ENCODE measurements at regions of chr19 and their contacts with region 1.

Region 1: GRCh38 chr19:46766569-46767317 is 20.5 kb upstream of the STRN4 start:
- DNase-seq: no peak
- ATAC-seq: peak; percentile 99
- H3K4me3 ChIP-seq: no peak overlapping the region
- H3K27ac ChIP-seq: no peak overlapping the region
- H3K4me1 ChIP-seq: no peaks in the 10 kb centered on the region
- H3K27me3 ChIP-seq: no peaks in the 10 kb centered on the region
- CTCF ChIP-seq: peak; percentile 70 to 89 (median 86)
- EP300 ChIP-seq: no peak
- POLR2A ChIP-seq: no peak
- RAD21 ChIP-seq: peak; percentile 38; the same call in 1 of the 2 replicates

Region 2: DNA sequence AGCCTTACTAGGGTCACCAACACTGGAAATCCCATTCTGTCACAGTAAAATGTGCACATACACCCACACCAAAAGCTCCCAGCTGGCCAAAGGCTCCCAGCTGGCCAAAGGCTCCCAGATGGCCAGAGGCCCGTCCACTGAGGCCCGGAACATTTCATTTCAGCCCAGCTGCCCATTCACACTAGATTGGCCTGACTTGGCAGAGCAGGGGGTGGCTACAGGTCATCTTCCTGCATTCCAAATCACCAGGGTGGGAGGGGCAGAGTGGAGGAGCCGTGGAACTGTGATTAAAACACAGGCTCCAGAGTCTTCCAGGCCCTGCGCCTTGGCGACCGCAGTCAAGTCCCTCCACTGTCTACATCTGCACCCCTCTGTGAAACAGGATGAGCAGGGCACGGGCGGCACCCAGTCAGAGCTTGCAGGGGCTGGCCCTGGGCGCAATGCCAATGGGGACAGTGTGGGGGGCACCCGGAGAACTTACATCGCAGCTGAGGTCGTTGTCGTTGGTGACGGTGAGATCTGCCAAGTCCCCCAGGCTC is 39.7 kb before region 1 on chr19:
- CTCF ChIA-PET with region 1: no interaction called
- POLR2A ChIA-PET with region 1: no interaction called
- RAD21 ChIA-PET with region 1: no interaction called
- SMC1A ChIA-PET with region 1: no interaction called
- in situ Hi-C with region 1: no loop called
- intact Hi-C with region 1: no loop called
- DNase-seq: no peak
- ATAC-seq: no peak
- H3K4me3 ChIP-seq: no peak overlapping the region
- H3K27ac ChIP-seq: no peak overlapping the region
- H3K4me1 ChIP-seq: peaks cover 9% of the 10 kb centered on the region
- H3K27me3 ChIP-seq: no peaks in the 10 kb centered on the region
- CTCF ChIP-seq: no peak
- EP300 ChIP-seq: no peak
- POLR2A ChIP-seq: no peak
- RAD21 ChIP-seq: no peak

Region 3: GRCh38 chr19:46746281-46747013 is 20.3 kb before region 1 on chr19 and contains the start of gene STRN4:
- CTCF ChIA-PET with region 1: interaction called, 11 read pairs
- POLR2A ChIA-PET with region 1: no interaction called
- RAD21 ChIA-PET with region 1: no interaction called
- SMC1A ChIA-PET with region 1: no interaction called
- in situ Hi-C with region 1: no loop called
- intact Hi-C with region 1: no loop called
- DNase-seq: no peak
- ATAC-seq: peak; percentile 49
- H3K4me3 ChIP-seq: peak within 1 kb of the TSS; percentile 100
- H3K27ac ChIP-seq: peak within 1 kb of the TSS; percentile 83
- H3K4me1 ChIP-seq: peaks cover 17% of the 10 kb centered on the region
- H3K27me3 ChIP-seq: no peaks in the 10 kb centered on the region
- CTCF ChIP-seq: no peak
- EP300 ChIP-seq: no peak
- POLR2A ChIP-seq: peak; percentile 66
- RAD21 ChIP-seq: no peak
- polyA plus RNA-seq, gene STRN4: 0.42 to 1.6 TPM

Region 4: DNA sequence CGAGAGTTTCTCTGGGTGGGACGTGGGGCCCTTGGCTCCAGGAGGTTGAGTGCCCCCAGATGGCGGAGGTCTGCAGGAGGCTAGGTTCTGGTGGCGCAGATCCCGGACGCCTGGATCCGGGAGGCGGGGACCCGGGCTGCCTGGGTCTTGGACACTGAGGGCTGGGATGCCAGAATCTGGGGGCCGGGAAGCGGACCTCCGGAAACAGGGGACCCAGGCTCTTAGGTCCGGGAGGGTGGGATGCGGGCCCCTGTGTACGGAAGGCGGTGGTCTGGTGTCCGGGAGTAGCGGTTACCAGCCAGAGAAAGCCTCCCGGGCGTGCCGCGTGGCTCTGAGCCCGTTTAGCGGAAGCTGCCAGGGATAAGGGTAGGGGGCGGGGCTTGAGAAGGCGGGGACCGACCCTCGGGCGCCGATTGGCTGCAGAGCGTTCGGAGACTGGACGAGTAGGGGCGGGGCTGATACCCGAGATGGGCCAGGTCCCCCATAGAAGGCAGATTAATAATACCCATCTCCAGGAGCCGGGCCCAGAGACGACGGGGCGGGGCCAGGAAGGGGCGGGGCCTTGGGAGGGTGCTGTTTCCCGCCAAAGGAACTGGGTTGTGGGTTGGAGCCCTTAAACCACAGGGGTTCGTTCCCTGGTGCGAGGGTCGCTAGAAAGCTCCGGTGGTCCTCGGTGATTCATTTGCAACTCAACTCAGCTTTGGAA is 21.7 kb after region 1 on chr19 and contains the start of gene SLC1A5:
- CTCF ChIA-PET with region 1: interaction called, 43 read pairs
- POLR2A ChIA-PET with region 1: interaction called, 4 read pairs
- RAD21 ChIA-PET with region 1: interaction called, 3 read pairs
- SMC1A ChIA-PET with region 1: interaction called, 6 read pairs
- in situ Hi-C with region 1: no loop called
- intact Hi-C with region 1: no loop called
- DNase-seq: peak; percentile 86
- ATAC-seq: peak; percentile 81
- H3K4me3 ChIP-seq: peak within 1 kb of the TSS; percentile 100
- H3K27ac ChIP-seq: peak within 1 kb of the TSS; percentile 94
- H3K4me1 ChIP-seq: 0 out of 2 replicates have a peak, but pooled peaks cover 7% of the 10 kb centered on the region
- H3K27me3 ChIP-seq: no peaks in the 10 kb centered on the region; a peak in 1 of 4 replicates
- CTCF ChIP-seq: no peak
- EP300 ChIP-seq: no peak
- POLR2A ChIP-seq: peak; percentile 100
- RAD21 ChIP-seq: no peak
- polyA plus RNA-seq, gene SLC1A5: 9.1 to 16.3 TPM

Region 5: DNA sequence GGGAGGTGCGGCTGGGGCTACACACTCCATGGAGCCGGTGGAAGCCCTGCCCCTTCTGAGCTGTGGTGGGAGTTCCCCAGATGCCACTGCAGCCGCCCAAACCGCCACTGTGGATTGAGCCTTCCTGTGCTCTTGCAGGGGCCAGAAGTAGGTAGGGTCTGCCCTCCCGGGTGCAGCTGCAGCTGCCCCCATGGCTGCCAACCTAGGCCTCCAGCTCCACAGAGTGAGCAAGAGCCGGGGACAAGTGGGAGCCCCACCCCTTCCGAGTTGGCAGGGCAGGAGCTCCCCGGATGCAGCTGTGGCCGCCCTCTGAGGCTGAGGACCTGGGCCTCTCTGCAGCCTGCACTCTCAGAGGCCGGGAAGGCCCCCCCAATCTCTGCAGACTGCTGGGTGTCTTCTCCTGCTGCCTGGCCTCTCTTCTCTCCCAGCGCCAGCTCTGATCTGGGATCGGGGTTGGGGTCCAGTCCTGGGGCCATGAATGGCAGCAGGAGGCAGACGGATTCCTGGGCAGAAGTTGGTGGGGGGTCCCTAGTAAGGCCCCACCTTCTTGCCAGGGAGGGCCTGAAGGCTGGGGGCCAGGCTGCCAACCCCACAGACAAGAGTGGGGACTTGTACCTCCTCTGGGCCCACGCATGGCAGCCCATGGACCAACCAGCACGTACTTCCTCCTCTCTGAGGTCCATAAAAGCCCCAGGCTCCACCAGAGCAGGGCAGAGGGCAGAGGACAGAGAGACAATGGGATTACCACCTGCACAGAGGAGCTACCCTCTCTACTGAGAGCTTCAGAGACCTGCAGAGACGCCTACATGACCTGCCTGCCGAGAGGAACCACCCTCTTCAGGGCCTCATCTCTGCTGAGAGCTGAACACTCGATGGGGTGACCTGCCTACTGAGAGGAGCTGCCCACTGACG is 55.0 kb after region 1 on chr19:
- CTCF ChIA-PET with region 1: interaction called, 23 read pairs
- POLR2A ChIA-PET with region 1: interaction called, 3 read pairs
- RAD21 ChIA-PET with region 1: interaction called, 5 read pairs
- SMC1A ChIA-PET with region 1: interaction called, 5 read pairs
- in situ Hi-C with region 1: no loop called
- intact Hi-C with region 1: no loop called
- DNase-seq: no peak
- ATAC-seq: peak; percentile 81
- H3K4me3 ChIP-seq: peak overlapping the region; percentile 33; the same call in 1 of the 2 replicates
- H3K27ac ChIP-seq: peak overlapping the region; percentile 51
- H3K4me1 ChIP-seq: peaks cover 27% of the 10 kb centered on the region
- H3K27me3 ChIP-seq: no peaks in the 10 kb centered on the region
- CTCF ChIP-seq: no peak
- EP300 ChIP-seq: no peak
- POLR2A ChIP-seq: peak; percentile 55
- RAD21 ChIP-seq: no peak